Vagina (tissue), 2 donors: ENCODE measurements at regions of chr4 and their contacts with region 1.

Region 1: GRCh38 chr4:174549721-174550120 is 27.4 kb upstream of the HPGD start:
- DNase-seq: no peak
- H3K4me3 ChIP-seq: no peak overlapping the region
- H3K27ac ChIP-seq: no peak overlapping the region
- H3K4me1 ChIP-seq: peaks cover 5% of the 10 kb centered on the region
- H3K27me3 ChIP-seq: no peaks in the 10 kb centered on the region
- CTCF ChIP-seq: no peak
- POLR2A ChIP-seq: no peak

Region 2: DNA sequence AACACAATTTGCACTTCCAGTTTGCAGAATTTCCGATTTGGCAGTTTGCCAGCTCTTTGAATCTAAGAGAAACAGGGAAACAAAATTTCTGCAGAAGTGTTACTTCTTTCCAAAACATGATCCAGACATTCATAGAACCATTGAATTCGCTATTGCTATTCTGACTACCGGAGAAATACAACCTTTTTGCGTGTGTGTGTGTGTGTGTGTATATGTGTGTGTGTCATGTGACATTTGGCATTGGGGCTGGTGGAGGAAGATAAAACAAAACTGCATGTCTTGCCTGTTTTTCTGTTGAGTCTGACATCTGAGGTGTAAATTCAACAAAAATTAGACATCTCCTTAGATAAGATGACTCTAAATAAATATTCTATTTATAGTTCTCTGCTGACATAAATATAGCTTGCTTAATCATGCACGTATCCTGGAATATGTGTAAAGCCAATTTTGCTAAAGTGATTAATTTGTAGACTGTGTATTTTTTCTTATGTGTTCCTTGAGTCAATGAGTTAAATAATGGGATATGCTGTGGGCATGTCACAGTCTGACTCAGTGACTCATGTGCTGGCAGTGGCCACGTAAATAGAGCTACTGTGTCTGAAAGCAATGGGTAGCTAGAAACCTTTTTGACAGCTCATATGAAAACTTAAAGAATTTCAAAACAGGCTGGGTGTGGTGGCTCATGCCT is 126.3 kb before region 1 on chr4:
- intact Hi-C with region 1: no loop called
- DNase-seq: no peak
- H3K4me3 ChIP-seq: no peak overlapping the region
- H3K27ac ChIP-seq: no peak overlapping the region
- H3K4me1 ChIP-seq: peaks cover 8% of the 10 kb centered on the region
- H3K27me3 ChIP-seq: no peaks in the 10 kb centered on the region
- CTCF ChIP-seq: no peak
- POLR2A ChIP-seq: no peak

Region 3: DNA sequence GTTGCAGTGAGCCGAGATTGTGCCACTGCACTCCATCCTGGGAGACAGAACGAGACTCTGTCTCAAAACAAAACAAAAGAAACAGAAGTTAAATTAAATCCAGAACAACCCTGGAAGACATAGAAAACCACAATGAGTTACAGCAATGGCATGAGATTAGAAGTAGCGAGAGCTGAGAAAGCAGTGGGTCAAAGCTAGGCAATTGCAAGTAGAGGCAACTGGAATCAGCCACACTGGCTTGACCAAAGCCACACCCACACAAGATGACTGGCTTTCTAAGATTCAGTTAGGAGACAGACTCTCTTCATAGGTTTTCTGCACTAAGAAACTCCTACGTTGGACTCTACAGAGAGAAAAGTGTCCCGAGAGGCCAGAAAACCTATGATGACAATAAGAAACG is 819.4 kb after region 1 on chr4:
- intact Hi-C with region 1: loop called (anchors 5 kb)
- DNase-seq: no peak
- H3K4me3 ChIP-seq: no peak overlapping the region
- H3K27ac ChIP-seq: no peak overlapping the region
- H3K4me1 ChIP-seq: no peaks in the 10 kb centered on the region
- H3K27me3 ChIP-seq: no peaks in the 10 kb centered on the region
- CTCF ChIP-seq: no peak
- POLR2A ChIP-seq: no peak